ENCODE measurements at regions of chr17 and their contacts with region 1.

Region 1: DNA sequence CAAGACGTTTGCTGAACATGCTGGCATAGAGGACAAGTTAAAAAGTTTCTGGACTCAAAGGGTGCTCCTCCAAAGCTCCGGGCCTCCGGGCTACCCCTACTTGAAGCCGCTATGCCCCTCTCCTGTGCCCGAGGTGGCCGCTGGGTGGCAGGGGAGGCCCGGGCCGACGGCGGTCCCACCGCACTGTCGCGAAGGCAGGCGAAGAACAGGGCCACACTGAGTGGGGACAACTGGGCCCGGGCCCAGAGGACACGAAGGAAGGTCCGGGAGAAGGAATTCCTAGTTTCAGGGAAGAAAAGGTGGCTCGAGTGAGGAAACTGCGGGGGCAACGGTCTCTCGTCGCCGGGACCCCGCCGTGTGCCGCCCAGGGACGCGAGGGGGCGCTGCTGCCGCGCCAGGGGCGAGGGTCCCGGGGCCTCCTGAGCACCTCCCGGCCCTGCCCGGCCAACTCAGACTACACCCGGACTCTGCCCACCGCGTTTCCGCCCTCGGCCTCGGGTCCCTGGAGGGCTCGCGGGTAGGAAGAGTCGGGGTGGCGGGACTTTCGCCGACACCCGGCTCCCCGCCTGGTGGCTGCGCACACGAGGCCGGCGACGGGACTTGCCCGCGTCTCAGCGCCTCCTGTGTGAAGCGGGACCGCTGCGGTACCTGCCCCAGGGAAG is 885 bp upstream of the CHCT1 start:
- DNase-seq: no peak
- H3K4me3 ChIP-seq: peak overlapping the region; percentile 40
- H3K27me3 ChIP-seq: no peaks in the 10 kb centered on the region
- CTCF ChIP-seq: peak; percentile 97

Region 2: DNA sequence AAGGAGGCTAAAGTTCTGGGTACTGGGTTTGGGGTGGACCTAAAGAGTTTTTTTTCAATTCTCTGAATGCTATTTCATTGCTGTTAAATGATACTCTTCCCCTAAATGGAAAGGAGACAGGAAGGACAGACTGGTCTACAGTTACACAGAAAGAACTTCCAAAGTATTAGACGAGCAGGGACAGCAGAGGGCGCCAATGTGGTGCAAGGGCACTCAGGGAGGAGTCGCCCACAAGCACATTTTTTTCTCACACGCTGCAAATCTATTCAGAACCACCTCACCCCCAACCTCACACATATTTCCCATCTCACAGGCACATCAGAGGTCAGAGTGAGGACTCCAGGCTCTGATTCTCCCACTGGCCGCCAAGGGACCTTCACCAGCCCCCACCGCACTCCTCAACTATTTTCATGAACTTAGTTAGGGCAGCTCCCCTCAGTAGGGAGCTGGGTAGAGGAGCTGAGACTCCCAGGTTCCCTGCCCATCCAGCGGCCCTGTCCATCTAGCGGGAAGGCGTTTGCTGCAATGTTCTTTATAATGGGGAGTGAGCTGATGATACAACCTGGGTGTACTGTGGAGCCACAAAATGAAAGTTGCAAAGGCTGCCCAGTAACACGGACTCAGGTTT is 278.4 kb before region 1 on chr17:
- CTCF ChIA-PET with region 1: interaction called, 11 read pairs
- POLR2A ChIA-PET with region 1: no interaction called
- DNase-seq: peak; percentile 52
- H3K4me3 ChIP-seq: no peak overlapping the region
- H3K27me3 ChIP-seq: peaks cover 21% of the 10 kb centered on the region
- CTCF ChIP-seq: peak; percentile 90

Region 3: GRCh38 chr17:60354223-60354622 is 67.2 kb before region 1 on chr17:
- CTCF ChIA-PET with region 1: no interaction called
- POLR2A ChIA-PET with region 1: no interaction called
- DNase-seq: peak; percentile 84
- H3K4me3 ChIP-seq: no peak overlapping the region
- H3K27me3 ChIP-seq: no peaks in the 10 kb centered on the region
- CTCF ChIP-seq: no peak

Region 4: DNA sequence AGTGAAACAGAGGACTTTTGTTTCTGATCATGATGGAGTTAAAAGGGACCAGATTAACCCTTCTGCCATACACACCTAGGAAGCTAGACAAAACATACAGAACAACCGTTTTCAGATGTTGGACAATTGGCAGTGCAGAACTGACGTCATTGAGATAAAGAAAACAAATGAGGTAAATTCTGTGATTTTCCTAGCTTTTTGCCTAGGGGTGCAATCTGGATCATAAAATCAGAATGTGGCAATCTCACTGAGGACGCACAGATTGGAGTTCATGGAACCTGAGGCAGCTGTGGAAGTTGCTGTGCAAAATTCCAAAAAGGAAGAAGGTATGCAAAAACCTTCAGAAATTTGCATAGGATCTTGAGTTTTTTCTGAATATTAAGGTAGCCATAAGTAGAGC is 14.5 kb before region 1 on chr17:
- CTCF ChIA-PET with region 1: interaction called, 11 read pairs
- POLR2A ChIA-PET with region 1: interaction called, 4 read pairs
- DNase-seq: no peak
- H3K4me3 ChIP-seq: no peak overlapping the region
- H3K27me3 ChIP-seq: no peaks in the 10 kb centered on the region
- CTCF ChIP-seq: no peak

Region 5: GRCh38 chr17:60442271-60443173 is 21.1 kb after region 1 on chr17:
- CTCF ChIA-PET with region 1: interaction called, 10 read pairs
- POLR2A ChIA-PET with region 1: no interaction called
- DNase-seq: no peak
- H3K4me3 ChIP-seq: no peak overlapping the region
- H3K27me3 ChIP-seq: no peaks in the 10 kb centered on the region
- CTCF ChIP-seq: no peak

Region 6: DNA sequence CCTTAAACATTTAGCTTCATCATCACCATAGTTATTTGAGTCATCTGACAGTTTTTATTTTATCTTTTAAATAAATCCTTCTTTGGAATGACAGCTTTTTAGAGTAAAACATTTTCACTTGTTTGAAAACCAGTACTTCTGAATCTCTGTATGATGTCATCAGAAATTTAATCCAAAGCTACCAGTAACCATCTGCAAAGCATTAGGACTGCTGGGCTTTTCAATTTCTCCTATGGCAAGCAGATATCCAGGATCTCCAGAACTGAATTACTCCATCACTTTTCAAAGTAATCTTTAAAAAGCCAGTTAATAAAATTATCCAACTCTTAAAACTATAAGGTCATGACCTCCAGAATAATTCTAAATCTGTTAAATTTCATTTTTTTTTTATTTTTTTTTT is 52.4 kb after region 1 on chr17:
- CTCF ChIA-PET with region 1: no interaction called
- POLR2A ChIA-PET with region 1: no interaction called
- DNase-seq: no peak
- H3K4me3 ChIP-seq: no peak overlapping the region
- H3K27me3 ChIP-seq: no peaks in the 10 kb centered on the region
- CTCF ChIP-seq: no peak